ENCODE measurements at regions of chr19 and their contacts with region 1.

Region 1: GRCh38 chr19:38964738-38965137 is 10.8 kb downstream of the FBXO17 start:
- DNase-seq: no peak
- ATAC-seq: no peak
- H3K4me3 ChIP-seq: no peak overlapping the region
- H3K4me3 Mint-ChIP-seq: no peak overlapping the region
- H3K27ac ChIP-seq: no peak overlapping the region
- H3K27ac Mint-ChIP-seq: peak overlapping the region in 1 of 9 donors; percentile 18
- H3K4me1 ChIP-seq: no peaks in the 10 kb centered on the region
- H3K4me1 Mint-ChIP-seq: peaks cover 0 to 10% (median 4%) of the 10 kb centered on the region in 7 donors
- H3K27me3 ChIP-seq: no peaks in the 10 kb centered on the region
- H3K27me3 Mint-ChIP-seq: peaks cover 0 to 20% (median 7%) of the 10 kb centered on the region in 5 donors

Region 2: DNA sequence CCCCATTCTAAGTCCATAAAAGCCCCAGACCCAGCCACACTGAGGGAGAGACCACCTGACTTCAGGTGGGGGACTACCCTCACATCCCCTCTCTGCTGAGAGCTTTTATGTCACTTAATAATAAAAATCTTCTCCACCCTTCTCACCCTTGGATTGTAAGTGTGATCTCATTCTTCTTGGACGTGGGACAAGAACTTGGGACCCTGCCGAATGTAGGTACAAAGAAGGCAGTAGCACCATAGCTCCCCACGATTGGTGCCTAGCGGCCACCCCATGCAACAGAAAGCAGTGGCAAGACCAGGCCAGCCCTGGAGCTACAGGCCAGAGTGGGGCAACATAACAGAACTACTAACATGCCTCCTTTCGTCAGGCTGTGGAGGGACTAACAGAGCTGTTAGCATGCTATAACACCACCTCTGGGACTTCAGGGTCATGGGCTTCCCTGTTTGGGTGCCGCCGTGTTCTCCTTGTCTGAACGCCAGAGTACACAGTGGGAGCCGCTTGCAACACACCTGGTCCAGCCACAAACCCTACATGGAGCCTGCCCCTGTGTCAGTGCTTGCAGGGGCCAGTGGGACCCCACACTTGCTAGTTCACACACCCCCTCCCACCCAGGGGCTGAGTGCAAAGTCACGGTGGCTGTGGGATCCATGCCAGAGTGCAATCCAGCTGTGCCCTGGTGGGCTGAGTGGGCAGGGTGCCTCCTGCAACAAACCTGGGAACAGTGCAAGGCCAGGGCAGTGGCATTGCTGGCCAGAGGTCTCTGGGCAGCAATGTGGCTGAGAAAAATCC is 16.0 kb after region 1 on chr19:
- CTCF ChIA-PET with region 1: no interaction called
- POLR2A ChIA-PET with region 1: no interaction called
- intact Hi-C with region 1: no loop called
- DNase-seq: no peak
- ATAC-seq: no peak
- H3K4me3 ChIP-seq: no peak overlapping the region
- H3K4me3 Mint-ChIP-seq: no peak overlapping the region
- H3K27ac ChIP-seq: no peak overlapping the region
- H3K27ac Mint-ChIP-seq: no peak overlapping the region
- H3K4me1 ChIP-seq: no peaks in the 10 kb centered on the region
- H3K4me1 Mint-ChIP-seq: peaks cover 0 to 22% (median 5%) of the 10 kb centered on the region in 7 donors
- H3K27me3 ChIP-seq: no peaks in the 10 kb centered on the region
- H3K27me3 Mint-ChIP-seq: peaks cover 12 to 34% (median 27%) of the 10 kb centered on the region in 5 donors

Region 3: DNA sequence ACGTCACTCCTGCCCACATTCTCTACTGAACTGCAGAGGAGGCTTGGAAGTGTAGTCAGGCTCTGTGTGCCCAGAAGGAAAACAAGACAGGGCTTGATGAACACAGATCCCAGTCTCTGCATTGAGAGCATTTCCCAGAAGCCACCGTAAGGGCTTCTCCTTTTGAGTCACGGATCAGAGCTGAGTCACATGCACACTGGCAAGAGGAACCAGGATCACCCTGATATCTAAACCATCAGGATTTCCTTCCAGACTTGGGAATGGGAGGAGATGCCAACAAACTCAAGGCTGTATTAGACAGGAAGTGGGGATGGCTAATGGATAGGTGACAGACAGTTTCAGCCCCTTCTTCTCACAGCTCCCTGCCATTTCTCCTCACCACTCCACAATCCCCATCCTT is 28.5 kb after region 1 on chr19:
- CTCF ChIA-PET with region 1: no interaction called
- POLR2A ChIA-PET with region 1: no interaction called
- intact Hi-C with region 1: no loop called
- DNase-seq: no peak
- ATAC-seq: no peak
- H3K4me3 ChIP-seq: no peak overlapping the region
- H3K4me3 Mint-ChIP-seq: no peak overlapping the region
- H3K27ac ChIP-seq: no peak overlapping the region
- H3K27ac Mint-ChIP-seq: no peak overlapping the region
- H3K4me1 ChIP-seq: no peaks in the 10 kb centered on the region
- H3K4me1 Mint-ChIP-seq: peaks cover 0 to 4% (median 0%) of the 10 kb centered on the region in 7 donors
- H3K27me3 ChIP-seq: no peaks in the 10 kb centered on the region
- H3K27me3 Mint-ChIP-seq: peaks cover 8 to 39% (median 12%) of the 10 kb centered on the region in 5 donors

Region 4: DNA sequence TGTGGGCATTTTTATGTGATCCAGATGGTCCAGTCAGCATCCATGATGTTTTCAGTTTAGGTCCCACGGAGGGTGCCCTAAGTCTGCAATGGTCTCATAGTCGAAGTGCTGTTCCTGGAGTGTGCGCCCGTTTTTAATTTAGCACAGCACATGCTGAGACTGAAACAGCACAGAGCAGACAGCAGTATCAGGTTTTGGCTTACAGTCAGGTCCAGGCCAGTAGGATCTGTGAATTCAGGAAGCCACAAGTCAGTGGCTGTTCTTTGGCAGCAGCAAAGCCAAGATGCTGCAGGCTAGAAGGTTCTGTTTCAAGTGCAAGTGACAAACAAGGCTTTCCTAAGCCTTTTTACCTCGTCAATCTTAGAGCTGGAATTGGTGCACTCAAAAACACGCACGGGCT is 49.3 kb after region 1 on chr19:
- CTCF ChIA-PET with region 1: no interaction called
- POLR2A ChIA-PET with region 1: no interaction called
- intact Hi-C with region 1: no loop called
- DNase-seq: no peak
- ATAC-seq: no peak
- H3K4me3 ChIP-seq: no peak overlapping the region
- H3K4me3 Mint-ChIP-seq: no peak overlapping the region
- H3K27ac ChIP-seq: no peak overlapping the region
- H3K27ac Mint-ChIP-seq: no peak overlapping the region
- H3K4me1 ChIP-seq: no peaks in the 10 kb centered on the region
- H3K4me1 Mint-ChIP-seq: no peaks in the 10 kb centered on the region
- H3K27me3 ChIP-seq: no peaks in the 10 kb centered on the region
- H3K27me3 Mint-ChIP-seq: peaks cover 10 to 23% (median 17%) of the 10 kb centered on the region in 5 donors

Region 5: DNA sequence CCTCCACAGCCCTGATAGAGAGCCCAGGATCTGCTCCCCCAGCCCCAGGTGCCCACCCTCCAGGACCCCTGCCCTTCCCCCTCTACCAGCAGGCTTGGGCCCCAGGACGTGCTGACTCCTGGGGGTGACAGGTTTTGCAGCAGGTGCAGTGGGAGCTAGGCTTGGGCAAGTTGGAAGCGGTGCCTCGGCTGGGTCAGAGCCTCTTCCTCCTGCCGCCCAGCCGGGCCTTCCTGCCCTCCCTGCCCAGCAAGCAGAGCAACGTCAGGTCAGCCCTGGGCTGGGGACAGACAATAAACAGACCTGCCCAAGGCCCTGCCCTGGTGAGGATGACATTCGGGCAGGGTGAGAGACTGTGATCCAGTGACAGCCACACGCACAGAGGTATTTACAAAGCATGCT is 222.8 kb after region 1 on chr19:
- CTCF ChIA-PET with region 1: no interaction called
- POLR2A ChIA-PET with region 1: no interaction called
- intact Hi-C with region 1: loop called in 1 of 2 experiments (anchors 1 kb)
- DNase-seq: no peak
- ATAC-seq: no peak
- H3K4me3 ChIP-seq: no peak overlapping the region
- H3K4me3 Mint-ChIP-seq: no peak overlapping the region
- H3K27ac ChIP-seq: no peak overlapping the region
- H3K27ac Mint-ChIP-seq: peak overlapping the region in 2 of 9 donors; percentile 7 to 42
- H3K4me1 ChIP-seq: no peaks in the 10 kb centered on the region
- H3K4me1 Mint-ChIP-seq: peaks cover 0 to 4% (median 0%) of the 10 kb centered on the region in 7 donors
- H3K27me3 ChIP-seq: no peaks in the 10 kb centered on the region
- H3K27me3 Mint-ChIP-seq: peaks cover 5 to 31% (median 10%) of the 10 kb centered on the region in 5 donors

Region 6: DNA sequence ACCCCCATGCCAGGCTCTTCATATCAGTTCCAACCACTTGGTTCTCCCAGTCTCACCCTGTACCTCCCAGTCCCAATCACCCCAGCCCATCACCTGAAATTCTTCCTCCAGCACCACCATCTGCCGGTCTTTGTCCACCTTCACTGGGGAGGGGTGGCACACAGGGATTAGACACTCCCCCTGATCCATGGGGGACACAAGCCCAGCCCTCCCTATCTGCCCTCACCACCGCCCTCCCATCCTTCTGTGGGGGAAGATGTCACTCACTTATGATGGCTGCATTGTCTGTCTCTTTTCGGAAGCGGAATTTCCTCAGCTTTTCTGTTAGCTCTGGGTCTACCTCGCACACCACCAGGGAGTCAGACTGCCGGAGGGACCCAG is 370.4 kb after region 1 on chr19:
- CTCF ChIA-PET with region 1: no interaction called
- POLR2A ChIA-PET with region 1: no interaction called
- intact Hi-C with region 1: loop called in 1 of 2 experiments (anchors 10 kb)
- DNase-seq: peak in 5 of 9 donors; percentile 24 to 50 (median 40)
- ATAC-seq: peak; percentile 44
- H3K4me3 ChIP-seq: peak overlapping the region; percentile 97
- H3K4me3 Mint-ChIP-seq: peak overlapping the region; percentile 98 to 100 (median 100)
- H3K27ac ChIP-seq: peak overlapping the region; percentile 94
- H3K27ac Mint-ChIP-seq: peak overlapping the region; percentile 94 to 100 (median 99)
- H3K4me1 ChIP-seq: peaks cover 29 to 58% of the 10 kb centered on the region in 2 donors
- H3K4me1 Mint-ChIP-seq: peaks cover 49 to 80% (median 56%) of the 10 kb centered on the region in 7 donors
- H3K27me3 ChIP-seq: no peaks in the 10 kb centered on the region
- H3K27me3 Mint-ChIP-seq: no peaks in the 10 kb centered on the region

Region 7: DNA sequence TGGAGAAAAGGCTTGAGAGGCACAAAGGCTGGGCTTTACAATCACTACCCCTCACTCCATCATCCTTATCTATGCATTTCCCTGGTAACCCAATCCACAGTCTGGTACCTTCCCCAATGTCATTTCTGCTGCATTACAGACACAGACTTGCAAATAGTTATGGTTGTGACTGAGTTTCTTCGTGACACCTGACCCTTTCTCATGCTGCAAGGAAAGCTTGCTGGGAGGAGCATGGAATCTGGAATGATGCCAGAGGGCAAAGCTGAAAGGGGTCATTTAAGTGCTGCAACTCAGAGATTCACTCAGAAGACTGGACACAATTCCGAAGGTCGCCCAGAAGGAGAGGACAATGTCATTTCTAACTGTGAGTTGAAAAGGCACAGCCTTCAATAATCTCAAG is 690.9 kb after region 1 on chr19 and contains the start of gene LGALS16:
- CTCF ChIA-PET with region 1: no interaction called
- POLR2A ChIA-PET with region 1: no interaction called
- intact Hi-C with region 1: no loop called
- DNase-seq: no peak
- ATAC-seq: no peak
- H3K4me3 ChIP-seq: no peak within 1 kb of the TSS
- H3K4me3 Mint-ChIP-seq: no peak within 1 kb of the TSS
- H3K27ac ChIP-seq: no peak within 1 kb of the TSS
- H3K27ac Mint-ChIP-seq: no peak within 1 kb of the TSS
- H3K4me1 ChIP-seq: no peaks in the 10 kb centered on the region
- H3K4me1 Mint-ChIP-seq: no peaks in the 10 kb centered on the region
- H3K27me3 ChIP-seq: no peaks in the 10 kb centered on the region
- H3K27me3 Mint-ChIP-seq: peaks cover 14 to 37% (median 30%) of the 10 kb centered on the region in 5 donors
- total RNA-seq, gene LGALS16: not detected